Left cardiac atrium (tissue), 4 donors: ENCODE measurements at regions of chr10 and their contacts with region 1.

Region 1: GRCh38 chr10:5948999-5949759 is 28.2 kb downstream of the IL15RA start:
- DNase-seq: peak; percentile 68
- ATAC-seq: peak; percentile 41 to 60

Region 2: DNA sequence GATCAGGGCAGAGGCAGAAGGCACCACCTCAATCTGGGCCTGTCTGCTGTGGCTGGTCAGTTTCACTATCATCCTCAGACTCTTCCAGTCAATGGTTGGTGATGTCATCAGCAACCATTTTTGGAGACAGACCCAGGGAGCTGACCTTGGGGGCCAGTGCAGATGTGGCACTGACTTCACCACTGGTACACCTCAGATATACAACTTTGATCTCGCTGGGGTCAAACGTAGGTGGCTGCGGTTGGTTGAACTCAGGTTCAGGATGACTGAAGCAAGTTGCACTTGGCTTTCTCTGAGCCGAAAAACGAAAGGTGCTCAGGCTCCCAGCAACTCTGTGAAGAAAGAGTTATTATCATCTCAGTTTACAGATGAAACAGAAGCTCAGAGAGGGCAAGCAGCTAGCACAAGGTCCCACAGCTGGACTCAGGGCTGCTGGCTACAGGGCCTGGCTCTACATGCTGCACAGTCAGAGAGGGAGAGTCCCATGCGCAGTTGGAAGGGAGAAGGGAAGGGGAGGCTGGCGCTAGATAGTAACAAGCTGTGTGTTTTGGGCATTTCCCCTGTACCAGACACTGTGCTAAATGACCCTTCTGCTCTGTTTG is 86.7 kb before region 1 on chr10:
- intact Hi-C with region 1: no loop called
- DNase-seq: no peak
- ATAC-seq: no peak

Region 3: DNA sequence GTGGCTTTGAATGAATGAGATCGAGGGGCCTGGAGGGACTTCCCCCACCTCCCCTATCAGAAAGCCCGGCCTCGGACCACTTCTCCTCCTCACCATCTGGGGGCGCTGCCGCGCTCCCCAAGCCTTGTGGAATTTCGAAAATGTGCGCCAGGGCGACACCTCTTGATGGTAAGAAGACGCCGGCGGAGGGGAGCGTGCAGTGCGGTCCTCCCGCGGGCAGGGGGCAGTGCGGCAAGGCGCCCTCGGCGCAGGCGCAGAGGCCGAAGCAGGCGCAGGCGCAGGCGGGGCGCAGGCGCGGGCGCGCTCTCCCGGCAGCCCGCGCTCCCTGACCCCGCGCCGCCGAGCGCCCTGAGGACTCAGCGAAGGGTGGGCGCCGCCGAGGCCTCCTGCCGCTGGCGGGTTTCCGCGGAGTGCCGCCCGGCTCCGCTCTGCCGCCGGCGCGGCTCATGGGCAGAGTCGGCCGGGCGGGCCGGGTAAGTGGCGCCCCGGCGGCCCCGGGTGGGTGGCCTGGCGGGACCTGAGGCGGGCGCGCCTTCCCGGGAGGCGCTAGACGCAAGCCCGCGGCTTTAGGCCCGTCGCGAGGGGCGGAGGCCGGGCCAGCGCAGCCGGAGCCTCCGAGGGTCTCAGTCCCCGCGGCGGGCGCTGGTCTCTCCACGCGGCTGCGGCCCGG is 139.7 kb after region 1 on chr10 and contains the start of gene RBM17:
- intact Hi-C with region 1: loop called in 1 of 2 experiments (anchors 10 kb)
- DNase-seq: peak; percentile 97
- ATAC-seq: peak; percentile 95 to 98
- total RNA-seq, gene RBM17: 58.6 to 80.3 TPM

Region 4: DNA sequence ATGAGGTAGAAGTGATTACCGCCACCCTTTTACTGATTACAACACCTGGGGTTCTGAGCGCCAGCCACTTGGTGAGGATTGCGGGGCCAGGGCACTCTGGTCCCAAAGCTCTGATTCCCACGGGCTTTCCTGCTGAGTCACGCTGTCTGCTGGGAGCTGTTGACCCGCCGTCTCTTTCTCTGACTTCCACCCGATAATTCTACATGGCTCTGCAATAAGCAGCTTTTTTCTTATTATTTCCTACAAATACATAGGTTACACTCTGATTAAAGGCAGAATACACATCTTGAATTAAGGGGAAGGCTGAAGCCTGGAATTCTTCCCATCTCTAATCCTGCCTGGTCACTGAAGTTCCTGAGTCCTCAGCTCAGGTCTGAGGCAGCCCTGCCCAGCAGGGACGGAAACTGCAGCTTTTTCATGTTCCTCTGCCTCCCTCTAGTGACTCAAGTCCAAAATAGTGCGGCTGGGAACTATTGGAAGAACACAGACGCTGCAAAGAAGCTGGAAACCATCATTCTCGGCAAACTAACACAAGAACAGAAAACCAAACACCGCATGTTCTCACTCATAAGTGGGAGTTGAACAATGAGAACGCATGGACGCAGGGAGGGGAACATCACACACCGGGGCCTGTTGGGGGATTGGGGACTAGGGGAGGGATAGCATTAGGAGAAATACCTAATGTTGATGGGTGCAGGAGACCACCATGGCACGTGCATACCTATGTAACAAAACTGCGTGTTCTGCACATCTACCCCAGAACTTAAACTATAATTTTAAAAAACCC is 452.6 kb after region 1 on chr10:
- intact Hi-C with region 1: loop called in 1 of 2 experiments (anchors 10 kb)
- DNase-seq: peak; percentile 80
- ATAC-seq: peak; percentile 95 to 97

Region 5: GRCh38 chr10:6482737-6483357 is 533.7 kb after region 1 on chr10:
- intact Hi-C with region 1: no loop called
- DNase-seq: no peak
- ATAC-seq: no peak

Region 6: GRCh38 chr10:7090529-7090928 is 1141.3 kb after region 1 on chr10:
- intact Hi-C with region 1: no loop called
- DNase-seq: no peak
- ATAC-seq: no peak